WTC11 (cell line): ENCODE measurements at regions of chr2 and their contacts with region 1.

Region 1: GRCh38 chr2:216692636-216693413 is 2.5 kb downstream of the IGFBP5 start:
- DNase-seq: peak; percentile 84
- ATAC-seq: peak; percentile 6; the same call in 1 of the 2 replicates
- H3K4me3 Mint-ChIP-seq: peak overlapping the region; percentile 79
- H3K27ac Mint-ChIP-seq: peak overlapping the region; percentile 34
- H3K4me1 Mint-ChIP-seq: peaks cover 53% of the 10 kb centered on the region
- H3K27me3 Mint-ChIP-seq: peaks cover 51% of the 10 kb centered on the region
- CTCF ChIP-seq: no peak

Region 2: GRCh38 chr2:216619411-216620393 is 73.1 kb before region 1 on chr2:
- CTCF ChIA-PET with region 1: no interaction called
- POLR2A ChIA-PET with region 1: no interaction called
- DNase-seq: no peak
- ATAC-seq: peak; percentile 70
- H3K4me3 Mint-ChIP-seq: no peak overlapping the region
- H3K27ac Mint-ChIP-seq: peak overlapping the region; percentile 35
- H3K4me1 Mint-ChIP-seq: peaks cover 31% of the 10 kb centered on the region
- H3K27me3 Mint-ChIP-seq: no peaks in the 10 kb centered on the region; the same call in 1 of the 2 replicates
- CTCF ChIP-seq: no peak

Region 3: DNA sequence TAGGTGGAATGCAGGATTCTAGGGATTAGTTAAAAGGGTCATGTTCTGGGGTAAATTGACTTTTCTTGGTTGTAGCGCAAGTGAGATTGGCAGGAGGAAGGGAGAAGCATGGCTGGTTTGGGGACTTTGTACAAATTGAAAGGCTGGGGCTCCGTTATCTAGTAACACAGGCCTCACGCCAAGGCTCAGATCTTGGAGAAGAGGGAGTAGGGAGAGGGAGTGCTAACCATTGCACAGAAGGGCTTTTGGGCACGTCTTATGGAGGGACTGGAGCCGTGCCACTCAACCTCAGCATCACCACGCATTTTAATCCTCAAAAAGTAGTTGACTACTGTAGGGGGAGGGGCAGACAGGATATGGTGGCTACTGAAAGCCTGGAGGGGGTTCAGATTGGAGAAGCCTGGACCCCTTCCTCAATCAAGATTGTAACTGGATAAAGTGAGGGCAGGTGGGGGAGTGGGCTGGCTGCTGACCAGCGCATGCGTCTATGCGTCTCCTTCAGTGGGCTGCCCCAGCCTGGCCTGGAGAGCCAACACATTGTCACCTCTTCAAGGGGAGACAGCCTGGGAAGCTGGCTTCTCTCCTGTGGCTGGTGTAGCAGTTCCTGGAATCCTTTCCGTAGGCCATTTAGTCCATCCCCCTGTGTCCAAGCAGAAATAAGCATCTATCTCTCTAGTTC is 11.7 kb before region 1 on chr2:
- CTCF ChIA-PET with region 1: interaction called, 23 read pairs
- POLR2A ChIA-PET with region 1: no interaction called
- DNase-seq: no peak
- ATAC-seq: no peak
- H3K4me3 Mint-ChIP-seq: no peak overlapping the region
- H3K27ac Mint-ChIP-seq: no peak overlapping the region
- H3K4me1 Mint-ChIP-seq: peaks cover 42% of the 10 kb centered on the region
- H3K27me3 Mint-ChIP-seq: no peaks in the 10 kb centered on the region; the same call in 1 of the 2 replicates
- CTCF ChIP-seq: no peak

Region 4: DNA sequence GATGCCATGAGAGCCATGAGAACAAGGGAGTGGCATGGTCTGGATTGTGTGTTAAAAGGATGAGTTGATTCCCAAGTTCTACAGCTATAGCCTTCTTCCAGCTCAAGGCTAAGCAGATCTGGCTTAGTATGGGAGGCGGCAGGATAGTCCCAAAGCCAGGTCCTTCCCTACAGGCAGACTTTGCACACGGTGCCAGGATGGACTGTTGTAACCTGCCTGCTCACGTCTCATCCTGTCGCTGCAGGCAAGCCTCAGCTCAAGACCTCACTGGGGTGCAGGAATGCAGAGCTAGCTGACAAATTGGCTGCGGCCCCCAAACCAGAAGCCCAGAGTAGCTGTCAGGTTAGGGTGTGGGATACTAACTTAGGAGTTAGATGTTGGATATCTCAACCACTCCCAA is 31.4 kb after region 1 on chr2:
- CTCF ChIA-PET with region 1: no interaction called
- POLR2A ChIA-PET with region 1: no interaction called
- DNase-seq: no peak
- ATAC-seq: no peak
- H3K4me3 Mint-ChIP-seq: no peak overlapping the region
- H3K27ac Mint-ChIP-seq: no peak overlapping the region
- H3K4me1 Mint-ChIP-seq: no peaks in the 10 kb centered on the region
- H3K27me3 Mint-ChIP-seq: no peaks in the 10 kb centered on the region; the same call in 1 of the 2 replicates
- CTCF ChIP-seq: no peak

Region 5: GRCh38 chr2:216765761-216766262 is 73.0 kb after region 1 on chr2:
- CTCF ChIA-PET with region 1: interaction called, 18 read pairs
- POLR2A ChIA-PET with region 1: interaction called, 7 read pairs
- DNase-seq: peak; percentile 78
- ATAC-seq: peak; percentile 98
- H3K4me3 Mint-ChIP-seq: peak overlapping the region; percentile 29
- H3K27ac Mint-ChIP-seq: peak overlapping the region; percentile 82
- H3K4me1 Mint-ChIP-seq: peaks cover 56% of the 10 kb centered on the region
- H3K27me3 Mint-ChIP-seq: peaks cover 3% of the 10 kb centered on the region; the same call in 1 of the 2 replicates
- CTCF ChIP-seq: no peak